Spleen (tissue), 13 donors: ENCODE measurements at regions of chrX and their contacts with region 1.

Region 1: DNA sequence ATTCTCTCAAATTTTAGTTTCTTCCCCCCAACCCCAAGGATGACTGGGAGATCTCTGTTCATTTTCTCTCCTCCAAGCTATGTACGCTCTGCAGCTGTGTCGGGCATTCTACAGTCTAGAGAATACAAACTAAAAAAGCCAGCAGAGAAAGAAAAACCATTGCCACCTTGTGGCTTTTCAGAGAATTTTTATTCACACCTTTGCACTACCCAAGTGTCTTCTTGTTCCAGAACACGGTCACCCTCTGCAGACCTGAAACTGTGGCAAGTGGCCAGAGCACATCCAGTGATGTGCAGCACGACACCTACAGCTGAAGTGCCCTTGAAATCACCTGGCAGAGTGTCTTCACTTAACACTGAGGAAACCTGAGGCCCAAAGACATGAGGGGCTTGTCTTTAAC is 68.6 kb downstream of the CHST7 start:
- DNase-seq: no peak
- H3K4me3 ChIP-seq: no peak overlapping the region
- H3K27ac ChIP-seq: no peak overlapping the region
- H3K4me1 ChIP-seq: peaks cover 0 to 10% (median 0%) of the 10 kb centered on the region in 6 donors
- H3K27me3 ChIP-seq: no peaks in the 10 kb centered on the region
- CTCF ChIP-seq: peak in 8 of 11 experiments; percentile 27 to 61 (median 54)
- POLR2A ChIP-seq: no peak

Region 2: DNA sequence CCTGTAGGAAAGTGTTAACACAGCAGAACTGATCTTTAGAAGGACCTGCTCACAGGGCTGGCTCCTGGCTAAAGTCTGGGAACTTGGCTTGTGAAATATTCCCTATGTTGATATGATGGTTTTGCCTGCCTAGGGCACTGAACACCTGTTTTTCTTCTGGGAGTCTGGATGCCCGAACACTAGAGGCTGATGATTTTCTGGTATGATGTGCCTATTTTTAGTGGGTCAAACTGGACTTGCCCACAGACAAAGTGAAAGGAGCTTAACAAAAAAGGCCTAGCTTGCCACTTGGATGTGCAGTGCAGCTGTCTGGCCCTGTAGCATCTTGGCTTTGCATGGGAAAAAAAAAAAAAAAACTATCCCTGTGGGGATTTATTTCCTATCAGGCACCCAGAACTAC is 136.1 kb before region 1 on chrX:
- intact Hi-C with region 1: no loop called
- DNase-seq: no peak
- H3K4me3 ChIP-seq: no peak overlapping the region
- H3K27ac ChIP-seq: no peak overlapping the region
- H3K4me1 ChIP-seq: no peaks in the 10 kb centered on the region
- H3K27me3 ChIP-seq: no peaks in the 10 kb centered on the region
- CTCF ChIP-seq: no peak
- POLR2A ChIP-seq: no peak

Region 3: GRCh38 chrX:46573331-46573891 is 68.7 kb before region 1 on chrX and contains the start of gene CHST7:
- intact Hi-C with region 1: loop called (anchors 10 kb)
- DNase-seq: peak; percentile 92
- H3K4me3 ChIP-seq: peak within 1 kb of the TSS; percentile 42 to 87 (median 68)
- H3K27ac ChIP-seq: peak within 1 kb of the TSS; percentile 16 to 88 (median 82)
- H3K4me1 ChIP-seq: peaks cover 0 to 57% (median 24%) of the 10 kb centered on the region in 6 donors
- H3K27me3 ChIP-seq: peaks cover 0 to 9% (median 0%) of the 10 kb centered on the region in 7 donors
- CTCF ChIP-seq: peak in 7 of 11 experiments; percentile 8 to 34 (median 19)
- POLR2A ChIP-seq: peak in 1 of 3 donors; percentile 57
- total RNA-seq, gene CHST7: 14.6 to 43.9 (median 29.2) TPM

Region 4: GRCh38 chrX:46791927-46792839 is 150.0 kb after region 1 on chrX:
- intact Hi-C with region 1: no loop called
- DNase-seq: no peak
- H3K4me3 ChIP-seq: peak overlapping the region in 1 of 8 donors; percentile 16
- H3K27ac ChIP-seq: peak overlapping the region in 4 of 8 donors; percentile 37 to 66 (median 46)
- H3K4me1 ChIP-seq: peaks cover 0 to 13% (median 2%) of the 10 kb centered on the region in 6 donors
- H3K27me3 ChIP-seq: no peaks in the 10 kb centered on the region
- CTCF ChIP-seq: no peak
- POLR2A ChIP-seq: no peak